ENCODE measurements at regions of chr18 and their contacts with region 1.

Region 1: DNA sequence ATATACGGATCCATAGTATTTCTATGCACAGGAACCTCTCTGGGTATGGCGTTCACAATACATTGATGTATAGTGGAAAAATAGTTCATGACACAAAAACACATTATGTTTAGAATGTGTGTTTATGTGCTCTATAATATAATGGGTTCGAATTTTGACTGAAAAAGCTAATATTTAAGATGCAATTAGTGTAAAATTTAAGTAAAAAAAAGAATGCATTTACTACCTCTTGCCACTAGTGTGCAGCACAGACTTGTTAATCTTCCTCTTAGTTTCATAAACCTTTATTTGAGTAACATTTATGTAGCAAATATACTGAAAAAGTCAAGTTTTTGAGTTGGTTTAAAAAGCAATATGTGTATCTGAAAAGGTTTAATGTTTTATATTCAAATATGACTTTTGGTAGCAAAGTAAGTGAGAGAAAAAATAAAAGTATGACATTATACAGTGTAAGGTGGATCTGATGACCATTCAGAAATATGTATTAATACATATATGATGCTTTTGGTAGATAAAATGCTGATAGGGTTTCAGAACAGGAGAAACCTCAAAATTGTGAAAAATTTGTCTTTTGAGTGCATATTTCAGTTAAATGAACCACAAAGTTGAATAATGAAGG is 49.4 kb downstream of the CCDC102B start:
- DNase-seq: no peak
- H3K4me3 ChIP-seq: no peak overlapping the region
- H3K27ac ChIP-seq: no peak overlapping the region
- H3K4me1 ChIP-seq: no peaks in the 10 kb centered on the region
- H3K27me3 ChIP-seq: no peaks in the 10 kb centered on the region
- CTCF ChIP-seq: peak in 3 of 4 experiments; percentile 27 to 45 (median 35)
- EP300 ChIP-seq: no peak
- POLR2A ChIP-seq: no peak

Region 2: GRCh38 chr18:68713791-68714190 is 133.5 kb before region 1 on chr18:
- intact Hi-C with region 1: no loop called
- DNase-seq: no peak
- H3K4me3 ChIP-seq: peak overlapping the region; percentile 77 to 97 (median 90)
- H3K27ac ChIP-seq: peak overlapping the region in 2 of 4 donors; percentile 79 to 84
- H3K4me1 ChIP-seq: peaks cover 0 to 23% (median 14%) of the 10 kb centered on the region in 4 donors
- H3K27me3 ChIP-seq: no peaks in the 10 kb centered on the region
- CTCF ChIP-seq: no peak
- EP300 ChIP-seq: no peak
- POLR2A ChIP-seq: no peak

Region 3: DNA sequence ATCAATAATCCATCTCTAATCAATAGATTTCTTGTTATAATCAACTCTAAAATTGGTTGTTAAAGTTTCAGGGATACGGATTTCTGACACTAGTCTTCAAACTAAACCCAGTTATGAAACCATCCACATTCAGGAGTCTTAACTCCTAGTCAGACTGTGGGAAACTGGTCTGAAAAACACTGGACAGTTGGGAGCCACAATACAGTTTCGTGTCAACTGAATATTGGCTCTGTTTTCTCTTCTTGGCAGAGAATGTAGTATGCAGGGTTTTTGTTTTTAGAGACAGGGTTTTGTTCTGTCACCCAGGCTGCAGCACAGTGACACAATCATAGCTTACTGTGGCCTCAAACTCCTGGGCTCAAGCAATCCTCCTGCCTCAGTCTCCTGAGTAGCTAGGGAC is 1235.1 kb after region 1 on chr18:
- intact Hi-C with region 1: loop called (anchors 10 kb)
- DNase-seq: no peak
- H3K4me3 ChIP-seq: no peak overlapping the region
- H3K27ac ChIP-seq: no peak overlapping the region
- H3K4me1 ChIP-seq: no peaks in the 10 kb centered on the region
- H3K27me3 ChIP-seq: no peaks in the 10 kb centered on the region
- CTCF ChIP-seq: no peak
- EP300 ChIP-seq: no peak
- POLR2A ChIP-seq: no peak